A549 (cell line): ENCODE measurements at regions of chr1 and their contacts with region 1.

Region 1: DNA sequence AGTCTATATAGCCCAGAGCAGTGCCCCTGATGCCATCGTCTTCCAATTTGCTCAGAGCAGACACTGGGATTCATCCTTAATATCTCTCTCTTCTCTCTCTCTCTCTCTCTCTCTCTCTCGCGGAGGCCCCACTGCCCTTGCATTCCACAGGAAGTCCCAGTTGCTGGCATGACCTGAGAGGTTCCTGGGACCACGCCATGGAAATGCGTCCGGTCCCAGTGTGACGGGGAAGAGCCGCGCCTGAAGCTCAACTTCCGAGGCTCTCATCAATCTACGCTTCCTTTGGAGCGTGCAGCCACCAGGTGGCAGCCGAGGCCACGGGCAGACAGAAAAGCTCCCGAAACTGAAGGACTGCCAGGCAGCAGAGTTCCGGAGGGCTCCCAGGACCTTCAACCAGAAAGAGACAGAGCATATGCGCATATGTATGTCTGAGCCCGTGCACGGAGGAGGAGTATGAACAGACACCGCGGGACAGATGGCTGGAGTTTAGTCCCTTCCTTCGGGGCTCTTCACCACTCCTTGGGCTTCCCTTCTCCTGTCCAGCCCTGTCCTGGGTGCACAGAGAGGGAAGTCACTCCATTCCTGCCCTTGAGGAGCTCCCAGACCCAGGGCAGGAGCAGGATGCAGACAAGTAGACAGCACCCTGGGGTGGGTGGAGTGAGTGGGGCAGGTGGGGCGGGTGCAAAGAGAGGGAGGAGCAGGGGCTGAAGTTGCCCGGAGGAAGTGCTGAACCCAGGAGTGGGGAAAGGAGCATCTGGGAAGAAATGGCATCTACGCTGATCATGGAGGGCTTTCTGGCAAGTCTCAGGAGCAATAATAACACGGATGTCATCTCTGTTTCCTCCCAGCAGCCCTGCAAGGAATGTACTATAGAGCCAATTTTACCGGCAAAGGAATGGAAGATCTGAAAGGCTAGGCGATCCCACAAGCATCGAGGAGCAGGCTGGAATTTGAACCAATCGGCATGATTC is 10.5 kb downstream of the PDZK1IP1 start:
- DNase-seq: peak; percentile 73 to 92
- ATAC-seq: peak; percentile 70 to 84
- H3K4me3 ChIP-seq: peak overlapping the region; percentile 46
- H3K27ac ChIP-seq: peak overlapping the region; percentile 81 to 90
- H3K4me1 ChIP-seq: peaks cover 36% of the 10 kb centered on the region
- CTCF ChIP-seq: peak; percentile 78
- EP300 ChIP-seq: no peak
- POLR2A ChIP-seq: no peak; the same call in 1 of the 2 replicates
- RAD21 ChIP-seq: peak; percentile 88 to 89

Region 2: DNA sequence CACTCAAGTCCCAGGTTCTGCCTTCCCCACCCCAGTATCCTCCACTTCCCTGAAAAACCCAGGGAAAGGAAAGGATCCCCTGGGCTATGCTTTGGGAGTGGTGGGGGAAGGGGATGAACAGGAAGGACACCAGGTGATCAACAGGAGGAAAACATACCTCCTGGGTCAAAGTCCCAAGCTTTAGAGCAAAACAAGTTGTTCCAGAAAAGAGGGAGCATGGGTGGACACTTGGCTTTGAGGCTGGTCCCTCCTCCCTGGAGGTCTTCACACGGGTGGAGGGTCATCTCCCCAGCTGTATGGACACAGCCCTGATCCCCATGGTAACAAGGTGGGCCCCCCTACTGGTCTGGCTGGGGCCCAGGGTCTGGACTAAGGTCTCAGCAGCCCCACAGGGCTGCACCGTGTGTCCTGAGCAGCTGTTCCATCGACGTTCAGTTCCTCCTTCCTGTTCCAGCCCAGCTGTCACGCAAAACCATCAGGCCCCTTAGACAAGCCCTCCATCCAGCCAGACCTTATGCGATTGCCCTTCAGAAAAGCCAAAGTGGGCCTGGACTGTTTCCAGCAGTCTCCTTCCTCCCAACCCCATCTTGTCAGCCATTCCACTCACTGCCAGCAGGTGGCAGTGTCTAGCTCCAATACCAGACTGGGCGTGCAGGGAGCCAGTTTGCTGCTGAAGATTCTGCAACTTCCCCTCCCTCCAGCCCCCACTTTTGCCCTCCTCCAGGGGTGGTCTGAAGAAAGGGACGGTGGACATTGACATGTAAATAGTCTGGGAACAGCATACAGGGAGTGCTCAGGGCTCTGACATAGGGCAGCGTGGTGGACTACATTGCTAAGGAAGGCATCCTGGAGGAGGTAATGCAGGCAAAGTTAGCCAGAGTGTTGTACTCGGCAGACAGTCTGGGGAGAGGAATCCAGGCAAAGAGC is 13.4 kb after region 1 on chr1:
- CTCF ChIA-PET with region 1: interaction called, 142 read pairs
- POLR2A ChIA-PET with region 1: interaction called, 4 read pairs
- DNase-seq: peak; percentile 62 to 64
- ATAC-seq: peak; percentile 47 to 61; a peak in 3 of 6 replicates
- H3K4me3 ChIP-seq: 0 out of 3 replicates have a peak overlapping the region, but pooled peaks have one; percentile 25
- H3K27ac ChIP-seq: peak overlapping the region; percentile 85 to 92
- H3K4me1 ChIP-seq: peaks cover 39% of the 10 kb centered on the region
- CTCF ChIP-seq: peak; percentile 74
- EP300 ChIP-seq: no peak
- POLR2A ChIP-seq: no peak
- RAD21 ChIP-seq: peak; percentile 58 to 73

Region 3: GRCh38 chr1:47201179-47201578 is 21.9 kb after region 1 on chr1:
- CTCF ChIA-PET with region 1: interaction called, 142 read pairs
- POLR2A ChIA-PET with region 1: no interaction called
- DNase-seq: no peak
- ATAC-seq: no peak
- H3K4me3 ChIP-seq: no peak overlapping the region
- H3K27ac ChIP-seq: no peak overlapping the region
- H3K4me1 ChIP-seq: no peaks in the 10 kb centered on the region; the same call in 2 of the 3 replicates
- CTCF ChIP-seq: no peak
- EP300 ChIP-seq: no peak
- POLR2A ChIP-seq: no peak
- RAD21 ChIP-seq: no peak

Region 4: DNA sequence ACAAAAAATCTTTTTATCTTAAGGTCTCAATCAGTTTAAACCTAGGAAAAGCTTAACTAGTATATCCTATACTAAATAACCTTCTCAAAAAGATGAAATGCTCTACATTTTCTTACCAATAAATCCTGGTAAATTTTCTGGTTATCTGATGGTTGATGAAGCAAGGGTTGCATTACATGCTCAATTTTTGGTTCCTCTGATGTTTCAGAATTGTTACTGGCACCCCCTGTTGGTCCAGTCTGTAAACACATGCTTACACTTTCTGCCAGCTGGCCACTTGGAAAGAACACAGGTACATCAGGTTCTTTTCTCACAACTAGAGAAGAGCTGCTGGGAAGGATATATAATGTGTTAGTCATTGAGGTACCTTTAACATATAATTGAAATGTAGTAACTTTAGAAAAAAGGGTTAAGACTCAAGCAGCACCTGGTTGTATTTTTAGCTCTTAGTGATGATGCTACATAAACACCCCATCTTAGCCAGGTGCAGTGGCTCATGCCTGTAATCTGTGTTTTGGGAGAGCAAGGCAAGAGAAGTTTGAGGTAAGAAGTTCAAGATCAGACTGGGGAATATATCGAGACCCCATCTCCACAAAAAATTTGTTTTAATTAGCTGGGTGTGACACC is 83.6 kb after region 1 on chr1:
- CTCF ChIA-PET with region 1: interaction called, 69 read pairs
- POLR2A ChIA-PET with region 1: no interaction called
- DNase-seq: peak; percentile 48 to 50
- ATAC-seq: peak; percentile 56 to 73; a peak in 4 of 6 replicates
- H3K4me3 ChIP-seq: no peak overlapping the region
- H3K27ac ChIP-seq: no peak overlapping the region
- H3K4me1 ChIP-seq: no peaks in the 10 kb centered on the region
- CTCF ChIP-seq: peak; percentile 65
- EP300 ChIP-seq: no peak
- POLR2A ChIP-seq: no peak
- RAD21 ChIP-seq: peak; percentile 53 to 55

Region 5: DNA sequence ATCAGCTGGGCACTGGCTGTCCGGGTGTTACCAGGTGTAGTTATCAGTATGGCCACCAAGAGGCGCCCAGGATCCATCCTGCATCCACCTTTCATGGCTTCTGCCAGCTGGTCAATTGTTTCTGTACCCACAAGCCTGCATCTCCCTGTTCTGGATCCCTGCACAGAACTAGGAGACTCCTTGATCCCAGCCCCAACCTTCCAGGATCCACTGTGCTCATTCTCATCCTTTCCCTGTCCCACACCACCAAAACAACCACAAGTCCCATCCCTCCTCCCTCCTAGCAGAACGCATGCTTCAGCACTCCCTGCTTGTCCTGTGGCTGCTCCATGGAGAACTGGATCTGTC is 209.6 kb after region 1 on chr1:
- CTCF ChIA-PET with region 1: interaction called, 12 read pairs
- POLR2A ChIA-PET with region 1: interaction called, 6 read pairs
- DNase-seq: peak; percentile 53 to 60
- ATAC-seq: peak; percentile 94 to 96
- H3K4me3 ChIP-seq: no peak overlapping the region
- H3K27ac ChIP-seq: no peak overlapping the region
- H3K4me1 ChIP-seq: no peaks in the 10 kb centered on the region
- CTCF ChIP-seq: peak; percentile 63
- EP300 ChIP-seq: no peak
- POLR2A ChIP-seq: no peak
- RAD21 ChIP-seq: peak; percentile 70 to 74